Activated CD4-positive, alpha-beta T cell treated with anti-CD3 and anti-CD28 coated beads for 36 hours (primary cell): ENCODE measurements at regions of chr3 and their contacts with region 1.

Region 1: GRCh38 chr3:197256836-197257444 is 41.5 kb downstream of the DLG1 start:
- DNase-seq: peak; percentile 50
- ATAC-seq: no peak
- H3K4me3 Mint-ChIP-seq: no peak overlapping the region
- H3K27ac Mint-ChIP-seq: no peak overlapping the region
- H3K4me1 Mint-ChIP-seq: peaks cover 68% of the 10 kb centered on the region
- H3K27me3 Mint-ChIP-seq: no peaks in the 10 kb centered on the region

Region 2: DNA sequence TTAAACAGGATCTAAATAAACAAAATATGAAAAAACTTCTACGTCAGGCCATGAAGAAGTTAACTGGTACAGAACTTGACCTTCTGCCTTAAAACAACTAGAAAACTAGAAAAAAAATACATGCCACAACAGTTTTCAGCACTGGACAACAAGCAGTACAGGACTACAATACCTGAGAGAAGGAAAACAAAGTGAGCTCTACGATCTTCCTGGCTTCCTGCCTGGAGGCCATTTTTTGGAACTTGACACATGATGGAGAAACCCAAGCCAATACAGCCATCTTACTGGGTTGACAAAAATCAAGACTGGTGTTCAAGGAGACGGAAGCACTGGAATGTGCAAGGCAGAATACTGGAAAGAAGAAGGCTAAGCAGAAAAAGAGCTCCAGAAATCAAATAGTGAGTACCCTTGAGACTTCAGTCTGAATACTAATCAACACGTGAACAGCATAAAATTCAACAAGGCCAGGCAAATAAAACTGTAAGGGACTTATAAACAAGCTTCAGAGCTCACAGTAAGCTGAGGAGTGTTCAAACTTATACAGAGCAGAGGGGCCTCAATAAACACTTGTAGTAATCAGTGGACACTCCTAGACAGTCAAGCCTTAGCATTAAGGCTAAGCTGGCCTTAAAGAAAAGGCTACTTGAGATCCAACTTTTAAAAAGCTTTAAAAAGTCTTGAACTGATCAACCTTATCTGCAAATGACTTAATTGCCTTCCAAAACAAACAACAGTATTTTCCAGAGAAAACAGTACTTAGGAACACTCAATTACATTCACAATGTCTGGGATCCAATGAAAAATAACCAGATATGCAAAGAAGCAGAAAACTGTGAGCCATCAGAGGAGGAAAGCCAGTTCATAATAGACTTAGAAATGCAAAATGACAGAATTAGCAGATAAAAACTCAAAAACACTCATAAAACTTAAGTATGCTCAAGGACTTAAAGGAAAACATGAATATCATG is 21.7 kb before region 1 on chr3:
- CTCF ChIA-PET with region 1: interaction called, 10 read pairs
- POLR2A ChIA-PET with region 1: no interaction called
- intact Hi-C with region 1: no loop called
- DNase-seq: no peak
- ATAC-seq: no peak
- H3K4me3 Mint-ChIP-seq: no peak overlapping the region
- H3K27ac Mint-ChIP-seq: no peak overlapping the region
- H3K4me1 Mint-ChIP-seq: peaks cover 29% of the 10 kb centered on the region
- H3K27me3 Mint-ChIP-seq: no peaks in the 10 kb centered on the region

Region 3: GRCh38 chr3:197270558-197271317 is 13.8 kb after region 1 on chr3:
- CTCF ChIA-PET with region 1: interaction called, 46 read pairs
- POLR2A ChIA-PET with region 1: no interaction called
- intact Hi-C with region 1: no loop called
- DNase-seq: no peak
- ATAC-seq: no peak
- H3K4me3 Mint-ChIP-seq: no peak overlapping the region
- H3K27ac Mint-ChIP-seq: no peak overlapping the region
- H3K4me1 Mint-ChIP-seq: peaks cover 52% of the 10 kb centered on the region
- H3K27me3 Mint-ChIP-seq: no peaks in the 10 kb centered on the region

Region 4: GRCh38 chr3:197298341-197298857 is 41.5 kb after region 1 on chr3 and contains the start of gene DLG1:
- CTCF ChIA-PET with region 1: interaction called, 4 read pairs
- POLR2A ChIA-PET with region 1: no interaction called
- intact Hi-C with region 1: loop called in 1 of 2 experiments (anchors 2 kb)
- DNase-seq: peak; percentile 93
- ATAC-seq: peak; percentile 81
- H3K4me3 Mint-ChIP-seq: peak within 1 kb of the TSS; percentile 92
- H3K27ac Mint-ChIP-seq: peak within 1 kb of the TSS; percentile 93
- H3K4me1 Mint-ChIP-seq: peaks cover 23% of the 10 kb centered on the region
- H3K27me3 Mint-ChIP-seq: peaks cover 20% of the 10 kb centered on the region
- total RNA-seq, gene DLG1: 58.8 to 78.4 TPM

Region 5: GRCh38 chr3:197471221-197472010 is 214.5 kb after region 1 on chr3:
- CTCF ChIA-PET with region 1: interaction called, 10 read pairs
- POLR2A ChIA-PET with region 1: no interaction called
- intact Hi-C with region 1: no loop called
- DNase-seq: no peak
- ATAC-seq: no peak
- H3K4me3 Mint-ChIP-seq: no peak overlapping the region
- H3K27ac Mint-ChIP-seq: no peak overlapping the region
- H3K4me1 Mint-ChIP-seq: peaks cover 6% of the 10 kb centered on the region
- H3K27me3 Mint-ChIP-seq: peaks cover 36% of the 10 kb centered on the region

Region 6: DNA sequence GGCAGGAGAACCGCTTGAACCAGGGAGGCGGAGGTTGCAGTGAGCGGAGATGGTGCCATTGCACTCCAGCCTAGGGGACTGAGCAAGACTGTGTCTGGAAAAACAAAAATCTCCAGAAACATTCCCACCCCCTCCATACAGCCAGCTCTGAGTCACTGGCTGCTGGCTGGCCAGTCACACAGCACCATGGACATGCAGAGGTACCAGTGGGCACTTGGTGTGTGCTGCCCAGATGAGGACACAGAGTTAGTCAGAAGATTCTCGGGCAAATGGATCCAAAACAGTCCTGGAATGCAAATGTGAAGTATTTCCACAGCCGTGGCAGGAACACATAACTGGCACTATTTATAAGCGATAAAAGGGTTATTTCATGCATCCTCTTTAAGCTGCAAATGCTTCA is 254.2 kb after region 1 on chr3:
- CTCF ChIA-PET with region 1: interaction called, 5 read pairs
- POLR2A ChIA-PET with region 1: no interaction called
- intact Hi-C with region 1: loop called in 1 of 2 experiments (anchors 1 kb)
- DNase-seq: no peak
- ATAC-seq: no peak
- H3K4me3 Mint-ChIP-seq: no peak overlapping the region
- H3K27ac Mint-ChIP-seq: no peak overlapping the region
- H3K4me1 Mint-ChIP-seq: peaks cover 6% of the 10 kb centered on the region
- H3K27me3 Mint-ChIP-seq: no peaks in the 10 kb centered on the region